Calu3 (cell line): ENCODE measurements at regions of chr7 and their contacts with region 1.

Region 1: GRCh38 chr7:151519765-151520418 is at the start of gene RHEB:
- DNase-seq: peak; percentile 98
- H3K4me3 Mint-ChIP-seq: peak within 1 kb of the TSS; percentile 99
- H3K27ac Mint-ChIP-seq: peak within 1 kb of the TSS; percentile 99
- H3K4me1 Mint-ChIP-seq: peaks cover 25% of the 10 kb centered on the region
- H3K27me3 Mint-ChIP-seq: no peaks in the 10 kb centered on the region
- CTCF ChIP-seq: no peak
- total RNA-seq, gene RHEB: 123 and 126 TPM in 2 replicates

Region 2: DNA sequence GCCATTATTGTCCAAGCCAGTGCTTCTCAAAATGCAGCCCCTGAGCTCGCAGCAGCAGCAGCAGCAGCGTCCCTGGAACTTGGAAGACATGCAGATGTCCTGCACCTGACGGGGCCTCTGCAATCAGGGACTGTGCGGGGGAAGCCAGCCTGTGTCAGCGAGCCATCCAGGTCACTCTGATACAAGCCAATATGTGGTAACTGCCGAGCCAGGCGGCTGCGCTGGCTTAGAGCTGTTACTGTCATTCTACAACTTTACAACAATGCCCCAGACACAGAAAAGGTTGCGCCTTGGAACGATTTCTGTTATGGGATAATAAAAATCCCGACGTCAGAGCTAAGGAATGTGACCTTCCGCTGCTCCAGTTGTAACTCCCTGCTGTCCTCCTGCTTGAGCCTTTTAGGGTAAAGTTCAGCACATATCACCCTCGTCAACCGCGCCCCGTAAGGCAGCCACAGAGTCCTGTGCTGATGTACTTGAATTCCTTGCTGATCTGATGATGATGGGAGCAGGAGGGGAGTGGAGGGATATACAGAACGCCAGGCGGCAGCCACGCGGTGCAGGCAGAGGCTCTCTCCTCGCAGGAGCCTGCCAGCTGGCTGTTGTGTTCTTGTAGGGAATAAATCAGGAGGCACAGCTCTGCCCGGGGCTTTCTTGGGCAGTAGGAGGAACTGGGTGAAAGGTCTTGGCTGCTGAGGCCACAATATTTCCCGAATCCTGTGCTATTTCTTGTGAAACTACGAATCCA is 60.0 kb before region 1 on chr7:
- CTCF ChIA-PET with region 1: no interaction called
- intact Hi-C with region 1: loop called (anchors 10 kb)
- DNase-seq: peak; percentile 51
- H3K4me3 Mint-ChIP-seq: peak overlapping the region; percentile 53
- H3K27ac Mint-ChIP-seq: peak overlapping the region; percentile 50
- H3K4me1 Mint-ChIP-seq: peaks cover 20% of the 10 kb centered on the region
- H3K27me3 Mint-ChIP-seq: no peaks in the 10 kb centered on the region
- CTCF ChIP-seq: no peak

Region 3: GRCh38 chr7:151550656-151551286 is 30.9 kb after region 1 on chr7:
- CTCF ChIA-PET with region 1: interaction called, 5 read pairs
- intact Hi-C with region 1: loop called (anchors 2 kb)
- DNase-seq: peak; percentile 74
- H3K4me3 Mint-ChIP-seq: no peak overlapping the region
- H3K27ac Mint-ChIP-seq: peak overlapping the region; percentile 47
- H3K4me1 Mint-ChIP-seq: peaks cover 38% of the 10 kb centered on the region
- H3K27me3 Mint-ChIP-seq: peaks cover 15% of the 10 kb centered on the region
- CTCF ChIP-seq: no peak

Region 4: DNA sequence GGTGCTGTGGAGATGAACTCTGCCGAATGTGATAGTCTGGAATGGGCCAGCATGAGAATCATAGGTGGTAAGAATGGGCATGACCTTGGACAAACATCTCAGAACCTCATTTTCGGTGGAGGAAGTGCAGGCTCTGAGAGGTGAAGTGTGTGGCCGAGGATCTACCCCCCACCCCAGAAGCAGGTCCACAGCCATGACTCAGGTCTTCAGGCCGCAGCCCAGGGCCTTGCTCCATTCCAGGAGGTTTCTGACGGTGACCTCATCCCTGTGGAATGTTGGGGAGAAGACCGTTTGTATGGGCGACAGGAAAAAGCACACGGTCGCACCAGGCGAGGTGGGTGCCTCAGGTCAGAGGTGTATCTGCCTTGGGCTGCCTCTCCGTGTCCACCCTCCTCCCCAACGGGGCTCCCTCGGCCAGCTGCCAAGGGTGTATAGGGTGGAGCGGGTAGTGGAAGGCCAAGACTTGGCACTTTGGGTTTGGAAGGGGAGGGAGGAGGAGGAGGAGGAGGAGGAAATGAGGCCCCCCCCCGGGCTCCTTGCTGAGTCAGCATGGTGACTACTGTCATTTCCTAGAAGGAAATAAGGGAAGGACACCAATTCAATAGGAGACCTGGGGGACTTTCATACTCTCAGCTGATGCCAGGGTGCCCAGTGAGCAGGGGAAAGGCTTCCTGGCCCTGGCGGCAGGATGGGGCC is 167.8 kb after region 1 on chr7:
- CTCF ChIA-PET with region 1: no interaction called
- intact Hi-C with region 1: no loop called
- DNase-seq: peak; percentile 89
- H3K4me3 Mint-ChIP-seq: peak overlapping the region; percentile 45
- H3K27ac Mint-ChIP-seq: peak overlapping the region; percentile 83
- H3K4me1 Mint-ChIP-seq: peaks cover 41% of the 10 kb centered on the region
- H3K27me3 Mint-ChIP-seq: no peaks in the 10 kb centered on the region
- CTCF ChIP-seq: no peak